ENCODE measurements at regions of chr15 and their contacts with region 1.

Region 1: DNA sequence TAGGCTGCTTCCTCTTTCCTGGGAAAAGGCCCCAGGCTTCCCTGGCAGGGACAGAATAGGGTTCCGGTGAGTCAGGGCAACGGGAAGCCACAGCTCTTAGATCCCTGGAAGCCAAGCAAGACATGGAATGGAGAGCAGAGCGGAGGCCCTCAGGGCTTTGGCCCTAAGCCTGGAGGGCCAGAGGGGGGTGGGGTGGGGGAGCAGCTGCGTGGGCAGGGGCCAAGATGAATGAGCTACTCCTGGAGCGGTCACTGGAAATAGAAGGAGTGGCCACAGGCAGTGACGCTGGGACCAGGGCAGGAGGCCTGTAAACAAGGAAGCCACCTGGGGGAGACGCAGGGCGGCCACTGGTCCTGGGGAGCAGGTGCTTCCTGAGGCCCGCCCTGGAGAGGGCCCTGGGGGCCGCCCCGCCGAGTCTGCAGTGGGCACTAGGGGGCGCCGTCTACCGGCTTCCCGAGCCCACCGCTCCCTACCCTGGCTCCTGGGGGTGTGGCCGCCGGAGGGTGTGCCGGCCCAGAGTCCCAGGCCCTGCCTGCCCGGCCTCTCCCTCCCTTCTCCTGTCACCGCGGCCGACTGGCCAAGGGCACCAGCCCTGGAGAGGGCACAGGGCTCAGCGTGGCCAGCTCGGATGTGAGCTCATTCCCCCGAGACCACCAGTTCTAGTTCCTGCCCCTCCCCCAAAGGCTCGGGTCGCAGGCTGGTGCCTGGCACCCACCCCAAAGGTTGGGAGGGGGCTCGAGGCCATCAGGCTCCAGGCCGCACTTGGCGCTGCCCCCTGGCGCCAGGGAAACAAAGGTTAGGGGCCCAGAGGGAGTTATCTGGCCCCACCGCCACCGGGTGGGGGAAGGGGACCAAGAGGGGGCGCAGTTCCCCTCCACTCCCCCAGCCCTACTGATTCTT is 12.1 kb downstream of the VPS18 start:
- DNase-seq: peak; percentile 65 to 98
- H3K4me3 ChIP-seq: peak overlapping the region; percentile 18 to 62 (median 36); a peak in 7 of 8 replicates
- H3K27ac ChIP-seq: no peak overlapping the region
- H3K4me1 ChIP-seq: peaks cover 0 to 13% (median 10%) of the 10 kb centered on the region in 4 experiments; a peak in 6 of 7 replicates
- H3K27me3 ChIP-seq: no peaks in the 10 kb centered on the region; a peak in 1 of 7 replicates
- CTCF ChIP-seq: peak in 2 of 3 experiments; percentile 80 to 97; a peak in 3 of 4 replicates
- EP300 ChIP-seq: no peak
- POLR2A ChIP-seq: no peak; a peak in 1 of 3 replicates
- RAD21 ChIP-seq: peak; percentile 80 to 87

Region 2: DNA sequence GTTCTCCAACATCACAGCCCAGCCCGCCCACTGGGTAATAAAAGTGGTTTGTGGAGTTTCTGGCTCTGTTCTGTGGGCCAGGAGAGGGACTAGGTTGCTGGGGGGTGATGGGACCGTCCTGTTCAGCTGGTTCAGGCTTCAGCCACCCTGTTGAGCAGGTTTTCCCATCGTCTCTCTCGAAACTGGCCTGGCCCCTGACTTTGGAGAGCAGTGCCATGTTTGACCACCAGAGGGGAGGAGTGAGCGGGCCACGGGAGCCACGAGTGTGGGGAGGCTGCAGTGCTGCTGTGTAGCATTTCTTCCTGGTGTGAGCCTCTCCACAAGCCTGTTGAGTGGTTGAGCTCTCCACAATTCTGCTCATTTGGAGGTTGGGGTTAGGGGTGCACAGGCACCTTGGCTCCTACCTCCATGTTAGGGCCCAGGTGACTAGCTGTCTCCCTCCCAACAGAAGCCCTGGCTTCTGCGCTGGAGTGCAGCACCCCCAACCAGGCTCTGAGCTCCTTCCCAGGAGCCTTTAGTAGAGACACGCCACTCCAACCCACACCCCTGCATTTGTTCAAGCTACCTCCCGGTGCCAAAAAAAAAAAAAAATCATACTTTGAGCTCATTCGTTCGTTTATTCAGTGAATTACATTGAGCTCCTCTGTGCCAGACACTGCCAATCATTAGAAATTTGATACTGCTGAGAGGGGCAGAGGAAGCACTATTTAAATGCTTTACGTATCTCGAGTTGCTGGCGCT is 48.6 kb before region 1 on chr15:
- CTCF ChIA-PET with region 1: interaction called, 82 read pairs
- POLR2A ChIA-PET with region 1: no interaction called
- DNase-seq: peak in 1 of 2 experiments; percentile 99
- H3K4me3 ChIP-seq: no peak overlapping the region
- H3K27ac ChIP-seq: no peak overlapping the region
- H3K4me1 ChIP-seq: peaks cover 0 to 3% (median 0%) of the 10 kb centered on the region in 4 experiments; a peak in 1 of 7 replicates
- H3K27me3 ChIP-seq: no peaks in the 10 kb centered on the region
- CTCF ChIP-seq: peak; percentile 95 to 99 (median 99)
- EP300 ChIP-seq: peak in 1 of 2 experiments; percentile 19; a peak in 1 of 3 replicates
- POLR2A ChIP-seq: no peak; a peak in 1 of 3 replicates
- RAD21 ChIP-seq: peak; percentile 73 to 82

Region 3: GRCh38 chr15:40941528-40942336 is 35.4 kb after region 1 on chr15:
- CTCF ChIA-PET with region 1: interaction called, 619 read pairs
- POLR2A ChIA-PET with region 1: interaction called, 6 read pairs
- DNase-seq: peak in 1 of 2 experiments; percentile 90
- H3K4me3 ChIP-seq: peak overlapping the region; percentile 30 to 64 (median 52)
- H3K27ac ChIP-seq: peak overlapping the region; percentile 58; the same call in 1 of the 2 replicates
- H3K4me1 ChIP-seq: peaks cover 0 to 28% (median 12%) of the 10 kb centered on the region in 4 experiments; a peak in 6 of 7 replicates
- H3K27me3 ChIP-seq: peaks cover 0 to 25% (median 16%) of the 10 kb centered on the region in 4 experiments; a peak in 6 of 7 replicates
- CTCF ChIP-seq: peak; percentile 71 to 80 (median 76)
- EP300 ChIP-seq: 0 out of 3 replicates have a peak, but pooled peaks of 1 of the 2 experiments have one; percentile 23
- POLR2A ChIP-seq: no peak
- RAD21 ChIP-seq: peak; percentile 36 to 71; a peak in 3 of 4 replicates

Region 4: GRCh38 chr15:40968290-40969085 is 62.1 kb after region 1 on chr15:
- CTCF ChIA-PET with region 1: interaction called, 56 read pairs
- POLR2A ChIA-PET with region 1: interaction called, 209 read pairs
- DNase-seq: no peak
- H3K4me3 ChIP-seq: no peak overlapping the region
- H3K27ac ChIP-seq: no peak overlapping the region
- H3K4me1 ChIP-seq: peaks cover 0 to 7% (median 4%) of the 10 kb centered on the region in 4 experiments; a peak in 3 of 7 replicates
- H3K27me3 ChIP-seq: no peaks in the 10 kb centered on the region
- CTCF ChIP-seq: no peak
- EP300 ChIP-seq: no peak
- POLR2A ChIP-seq: no peak
- RAD21 ChIP-seq: no peak

Region 5: DNA sequence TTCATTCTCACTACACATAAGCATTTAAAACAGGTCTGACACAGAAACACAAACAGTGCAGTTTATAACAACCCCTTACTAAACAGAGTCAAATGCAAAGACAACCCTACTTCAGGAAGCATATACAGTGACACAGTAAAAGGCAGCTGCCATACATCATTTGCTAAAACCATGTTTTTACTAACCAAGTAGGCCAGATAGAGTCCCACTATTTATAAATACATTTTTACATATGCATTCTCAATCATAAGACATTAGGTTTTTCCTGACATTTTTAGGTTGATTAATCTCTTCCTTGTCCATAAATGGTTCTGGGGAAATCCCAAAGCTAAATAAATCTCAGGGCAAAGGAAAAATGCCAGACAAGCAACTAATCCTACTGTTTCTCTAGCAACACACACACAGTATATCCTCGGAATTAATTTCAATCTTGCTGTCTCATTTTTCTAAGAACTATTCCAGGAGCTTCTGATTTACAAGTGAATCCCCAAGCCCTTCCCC is 86.0 kb after region 1 on chr15:
- CTCF ChIA-PET with region 1: interaction called, 36 read pairs
- POLR2A ChIA-PET with region 1: no interaction called
- DNase-seq: no peak
- H3K4me3 ChIP-seq: no peak overlapping the region
- H3K27ac ChIP-seq: no peak overlapping the region
- H3K4me1 ChIP-seq: no peaks in the 10 kb centered on the region
- H3K27me3 ChIP-seq: no peaks in the 10 kb centered on the region
- CTCF ChIP-seq: no peak
- EP300 ChIP-seq: no peak
- POLR2A ChIP-seq: no peak
- RAD21 ChIP-seq: no peak

Region 6: DNA sequence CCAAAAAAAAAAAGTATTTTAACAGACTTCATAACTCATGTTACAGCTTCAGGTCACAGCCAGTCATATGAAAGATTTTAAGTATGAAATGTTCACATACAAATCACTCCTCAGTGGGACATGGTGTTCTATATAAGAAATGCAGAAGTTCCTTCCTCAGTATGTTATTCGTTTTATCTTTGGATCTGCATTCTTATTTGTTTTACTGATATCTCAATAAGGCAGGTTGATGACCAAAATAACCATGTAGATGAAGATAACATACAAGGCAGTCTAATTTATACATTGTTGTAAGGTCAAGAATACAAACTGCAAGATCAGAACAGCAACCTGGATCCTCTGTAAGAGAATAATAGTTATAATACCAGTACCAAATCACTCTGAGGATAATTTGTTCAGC is 122.5 kb after region 1 on chr15:
- CTCF ChIA-PET with region 1: interaction called, 257 read pairs
- POLR2A ChIA-PET with region 1: interaction called, 5 read pairs
- DNase-seq: no peak
- H3K4me3 ChIP-seq: no peak overlapping the region
- H3K27ac ChIP-seq: no peak overlapping the region
- H3K4me1 ChIP-seq: no peaks in the 10 kb centered on the region
- H3K27me3 ChIP-seq: no peaks in the 10 kb centered on the region
- CTCF ChIP-seq: no peak
- EP300 ChIP-seq: no peak
- POLR2A ChIP-seq: no peak
- RAD21 ChIP-seq: no peak

Measured in H1 (cell line).